ENCODE measurements at regions of chr17 and their contacts with region 1.

Region 1: DNA sequence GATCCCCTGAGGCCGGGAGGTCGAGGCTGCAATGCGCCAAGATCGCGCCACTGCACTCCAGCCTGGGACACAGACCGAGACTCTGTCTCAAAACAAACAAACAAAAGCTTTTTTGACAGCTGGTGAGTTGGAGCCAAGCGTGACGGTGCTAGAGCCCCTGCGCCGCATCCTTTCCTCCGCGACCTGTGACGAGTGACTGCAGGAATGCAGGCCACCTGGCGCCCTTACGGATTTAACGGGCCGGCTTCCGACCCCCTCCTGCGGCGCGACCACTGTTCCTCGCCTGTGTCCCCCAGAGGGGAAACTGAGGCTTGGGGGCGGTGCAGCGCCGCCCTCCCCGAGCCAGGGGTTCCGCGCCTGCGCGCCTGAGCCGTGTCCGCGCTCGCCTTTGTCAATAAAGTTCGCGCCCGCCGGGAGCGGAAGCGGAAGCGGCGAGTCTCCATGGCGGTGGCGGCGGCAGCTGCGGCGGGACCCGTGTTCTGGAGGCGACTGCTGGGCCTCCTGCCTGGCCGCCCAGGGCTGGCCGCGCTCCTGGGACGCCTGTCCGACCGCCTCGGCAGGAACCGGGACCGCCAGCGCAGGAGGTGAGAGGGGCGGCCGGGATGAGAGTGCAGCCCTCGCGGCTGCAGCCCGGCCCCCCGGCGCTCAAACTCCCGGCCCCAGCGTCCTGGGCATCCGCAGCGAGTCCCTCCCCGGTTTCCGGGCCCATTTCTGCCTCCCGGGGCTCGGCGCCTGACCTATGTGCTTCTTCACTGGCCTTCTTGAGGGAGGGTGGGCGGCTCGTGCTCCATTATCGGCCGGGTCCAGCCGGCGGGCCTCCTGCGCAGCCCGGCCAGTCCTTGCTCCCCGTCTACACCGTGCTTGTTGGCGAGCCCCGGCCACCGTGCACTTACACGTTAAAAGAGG is at the start of gene PGS1:
- DNase-seq: peak; percentile 69
- H3K4me3 Mint-ChIP-seq: peak within 1 kb of the TSS; percentile 85
- H3K27ac Mint-ChIP-seq: peak within 1 kb of the TSS; percentile 66
- H3K4me1 Mint-ChIP-seq: peaks cover 51% of the 10 kb centered on the region
- H3K27me3 Mint-ChIP-seq: no peaks in the 10 kb centered on the region
- CTCF ChIP-seq: no peak
- total RNA-seq, gene PGS1: 25.7 and 31.8 TPM in 2 replicates

Region 2: DNA sequence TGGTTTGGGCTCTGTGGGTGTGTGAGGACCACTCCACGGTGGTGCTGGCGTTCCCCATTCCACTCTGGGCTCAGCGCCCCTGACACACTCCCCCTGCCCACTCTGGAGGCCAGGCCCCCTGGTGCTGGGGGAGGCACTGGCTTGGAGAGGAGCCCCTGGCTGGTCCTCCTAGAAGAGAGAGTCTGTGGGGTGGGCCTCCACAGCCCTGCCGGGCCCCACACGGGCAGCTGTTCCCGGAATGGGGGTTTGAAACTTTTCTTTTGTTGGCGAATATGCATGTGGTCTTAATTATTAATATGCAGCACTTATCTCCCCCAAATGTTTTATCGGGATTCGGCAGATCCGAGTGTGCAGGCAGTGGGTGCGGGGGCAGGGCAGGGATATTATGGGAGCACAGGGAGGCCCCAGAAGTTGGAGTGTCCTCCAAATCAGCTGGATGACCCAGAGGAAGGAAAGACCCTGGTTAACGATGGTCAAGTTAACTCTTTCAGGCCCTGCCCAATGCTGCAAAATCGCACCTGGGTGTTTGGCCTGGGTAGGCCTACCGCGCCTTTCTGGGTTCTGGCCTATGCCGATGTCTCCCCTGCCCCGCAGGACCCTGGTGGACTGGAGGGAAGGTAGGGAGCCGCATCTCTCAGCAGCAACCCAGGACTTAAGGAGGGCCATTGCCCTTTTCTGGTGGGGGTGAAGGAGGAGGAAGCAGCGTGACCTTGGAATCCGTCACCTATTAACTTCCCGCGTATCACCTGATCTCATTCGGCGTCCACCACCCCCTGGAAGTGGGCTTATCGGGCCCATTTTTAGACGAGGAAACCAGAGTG is 111.0 kb before region 1 on chr17:
- CTCF ChIA-PET with region 1: no interaction called
- POLR2A ChIA-PET with region 1: no interaction called
- intact Hi-C with region 1: no loop called
- DNase-seq: no peak
- H3K4me3 Mint-ChIP-seq: no peak overlapping the region
- H3K27ac Mint-ChIP-seq: no peak overlapping the region
- H3K4me1 Mint-ChIP-seq: peaks cover under 1% of the 10 kb centered on the region
- H3K27me3 Mint-ChIP-seq: no peaks in the 10 kb centered on the region
- CTCF ChIP-seq: no peak

Region 3: DNA sequence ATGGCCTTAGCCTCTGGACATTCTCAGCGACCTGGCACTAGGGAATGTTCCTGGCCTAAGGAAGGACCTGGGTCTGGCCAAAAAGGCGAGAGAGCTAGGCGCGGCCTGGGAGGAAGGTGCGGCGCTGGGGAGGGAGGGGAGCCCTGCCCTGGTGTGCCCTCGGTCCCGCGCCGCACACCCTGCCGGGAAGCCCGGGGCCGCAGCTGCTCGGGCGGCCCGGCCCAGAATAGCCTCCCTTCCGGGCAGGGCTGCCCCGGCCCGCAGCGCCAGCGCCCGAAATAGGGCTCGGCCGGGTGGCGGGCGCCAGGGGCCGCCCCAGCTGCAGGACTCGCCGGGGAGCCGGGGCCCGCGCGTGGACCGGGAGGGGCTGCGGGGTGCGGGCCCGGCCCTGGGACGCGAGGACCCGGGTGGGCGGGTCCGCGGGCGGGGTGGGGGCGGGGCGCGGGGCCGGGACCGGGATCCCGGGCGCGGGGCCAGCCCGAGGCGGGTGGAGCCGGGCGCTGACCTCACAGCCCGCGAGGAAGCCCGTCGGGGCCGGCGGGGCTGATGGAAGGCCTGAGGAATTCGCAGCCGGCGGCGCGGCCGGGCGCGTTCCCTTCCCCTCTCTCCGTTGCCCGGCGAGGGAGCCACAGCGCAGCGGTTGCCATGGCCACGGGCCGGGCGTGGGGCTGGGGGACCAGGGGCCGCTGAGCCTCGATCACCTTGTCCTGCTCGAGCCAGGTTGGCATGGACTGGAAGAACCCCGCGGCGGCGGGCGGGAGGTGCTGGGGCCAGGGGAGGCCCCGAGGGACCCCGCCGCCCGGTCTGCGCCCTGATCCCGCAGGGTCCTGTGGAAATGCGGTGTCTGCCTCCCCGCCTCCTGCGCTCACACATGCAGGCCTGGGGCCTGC is 36.7 kb before region 1 on chr17:
- CTCF ChIA-PET with region 1: no interaction called
- POLR2A ChIA-PET with region 1: interaction called, 14 read pairs
- intact Hi-C with region 1: no loop called
- DNase-seq: peak; percentile 70
- H3K4me3 Mint-ChIP-seq: peak overlapping the region; percentile 59
- H3K27ac Mint-ChIP-seq: no peak overlapping the region
- H3K4me1 Mint-ChIP-seq: peaks cover 32% of the 10 kb centered on the region
- H3K27me3 Mint-ChIP-seq: no peaks in the 10 kb centered on the region
- CTCF ChIP-seq: no peak